ENCODE measurements at regions of chr1 and their contacts with region 1.

Region 1: GRCh38 chr1:118335331-118335732 is 150.3 kb upstream of the SPAG17 start:
- DNase-seq: no peak
- ATAC-seq: no peak
- H3K4me3 ChIP-seq: no peak overlapping the region
- H3K27ac ChIP-seq: no peak overlapping the region
- H3K4me1 ChIP-seq: no peaks in the 10 kb centered on the region
- H3K27me3 ChIP-seq: no peaks in the 10 kb centered on the region
- CTCF ChIP-seq: no peak
- POLR2A ChIP-seq: no peak
- RAD21 ChIP-seq: no peak

Region 2: DNA sequence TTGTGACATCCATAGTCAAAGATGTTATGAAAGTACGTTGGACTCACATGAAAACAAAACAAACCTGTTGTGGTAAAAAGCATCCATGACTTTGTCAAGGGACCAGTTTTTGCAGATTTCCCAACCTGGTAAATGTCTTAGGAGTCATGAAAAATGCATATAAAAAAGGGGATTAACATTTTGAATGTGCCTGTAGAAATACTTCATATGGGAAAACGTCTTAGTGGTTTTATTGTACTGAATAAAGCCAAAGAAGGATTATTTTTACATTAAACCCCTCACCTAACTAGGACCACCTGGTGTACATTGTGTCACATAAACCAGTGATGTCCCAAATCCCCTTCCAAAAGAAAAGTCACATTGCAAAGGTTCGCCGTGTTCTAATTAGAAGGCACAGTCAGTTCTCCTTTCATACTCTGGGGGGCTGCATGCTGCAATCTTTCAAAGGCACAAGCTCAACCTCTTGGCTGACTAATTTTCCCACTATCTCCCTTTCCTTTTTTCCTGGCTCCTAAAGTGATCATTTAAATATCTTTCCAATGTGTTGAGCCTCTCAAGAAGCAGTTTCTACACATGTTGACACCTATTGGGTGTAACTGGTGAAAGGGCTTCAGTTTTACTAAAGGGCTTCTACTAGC is 30.5 kb before region 1 on chr1:
- CTCF ChIA-PET with region 1: no interaction called
- POLR2A ChIA-PET with region 1: no interaction called
- RAD21 ChIA-PET with region 1: no interaction called
- intact Hi-C with region 1: loop called (anchors 1 kb)
- DNase-seq: no peak
- ATAC-seq: no peak
- H3K4me3 ChIP-seq: no peak overlapping the region
- H3K27ac ChIP-seq: no peak overlapping the region
- H3K4me1 ChIP-seq: no peaks in the 10 kb centered on the region
- H3K27me3 ChIP-seq: no peaks in the 10 kb centered on the region; the same call in 1 of the 2 replicates
- CTCF ChIP-seq: peak in 1 of 3 experiments; percentile 37; a peak in 2 of 6 replicates
- POLR2A ChIP-seq: no peak
- RAD21 ChIP-seq: no peak

Region 3: DNA sequence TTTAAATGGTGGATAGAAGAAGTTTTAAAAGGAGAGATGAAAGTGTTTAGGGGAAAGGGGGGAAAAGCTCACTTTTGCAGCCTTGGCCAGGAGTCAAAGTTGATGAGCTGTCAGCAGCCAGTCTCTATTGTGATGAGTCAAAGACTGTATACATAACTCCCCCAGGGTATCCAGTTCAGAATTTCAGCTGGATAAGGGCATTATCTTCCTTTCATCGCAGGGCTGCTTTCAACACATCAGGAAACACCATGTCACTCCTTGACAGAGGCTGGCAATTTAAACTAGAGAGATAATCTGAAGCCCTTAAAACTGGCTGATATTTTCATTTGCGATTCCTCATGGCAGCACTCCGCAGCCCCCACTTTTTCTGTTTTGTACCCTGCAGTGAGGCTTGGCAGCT is 324.3 kb after region 1 on chr1:
- CTCF ChIA-PET with region 1: no interaction called
- POLR2A ChIA-PET with region 1: no interaction called
- RAD21 ChIA-PET with region 1: no interaction called
- intact Hi-C with region 1: no loop called
- DNase-seq: no peak
- ATAC-seq: no peak
- H3K4me3 ChIP-seq: no peak overlapping the region
- H3K27ac ChIP-seq: no peak overlapping the region
- H3K4me1 ChIP-seq: no peaks in the 10 kb centered on the region
- H3K27me3 ChIP-seq: no peaks in the 10 kb centered on the region
- CTCF ChIP-seq: no peak
- POLR2A ChIP-seq: no peak
- RAD21 ChIP-seq: no peak

Measured in HCT116 (cell line).